GM10248 (cell line): ENCODE measurements at regions of chr4 and their contacts with region 1.

Region 1: GRCh38 chr4:2497931-2498330 is 29.0 kb downstream of the RNF4 start:
- DNase-seq: peak; percentile 80
- CTCF ChIP-seq: no peak

Region 2: DNA sequence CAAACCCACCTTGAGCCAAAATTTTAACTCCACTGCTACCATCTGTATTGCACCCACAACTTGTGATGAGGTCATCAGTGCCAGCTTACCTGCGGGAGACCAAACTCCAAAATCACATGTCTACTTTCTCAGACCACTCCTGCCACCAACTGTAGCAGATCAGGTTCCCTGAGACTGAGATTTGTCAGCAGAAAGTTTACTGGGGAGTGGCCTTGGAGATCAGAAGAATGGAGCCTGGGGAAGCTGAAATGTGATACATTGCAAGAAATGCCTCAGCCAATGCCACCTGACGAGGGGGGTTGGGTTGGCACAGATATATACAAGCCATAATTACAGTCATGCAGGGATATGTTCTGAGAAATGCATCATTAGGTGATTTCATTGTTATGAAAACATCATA is 275.1 kb before region 1 on chr4:
- CTCF ChIA-PET with region 1: no interaction called
- POLR2A ChIA-PET with region 1: no interaction called
- DNase-seq: no peak
- CTCF ChIP-seq: no peak

Region 3: GRCh38 chr4:2484993-2485392 is 12.9 kb before region 1 on chr4:
- CTCF ChIA-PET with region 1: interaction called, 14 read pairs
- POLR2A ChIA-PET with region 1: interaction called, 3 read pairs
- DNase-seq: peak; percentile 78
- CTCF ChIP-seq: no peak